Caco-2 (cell line): ENCODE measurements at regions of chr16 and their contacts with region 1.

Region 1: GRCh38 chr16:4936991-4937781 is at the start of gene PPL:
- DNase-seq: peak; percentile 96 to 98
- H3K4me3 ChIP-seq: peak within 1 kb of the TSS; percentile 77
- H3K4me3 Mint-ChIP-seq: peak within 1 kb of the TSS; percentile 88
- H3K27ac Mint-ChIP-seq: peak within 1 kb of the TSS; percentile 63
- H3K4me1 ChIP-seq: peaks cover 17% of the 10 kb centered on the region
- H3K4me1 Mint-ChIP-seq: no peaks in the 10 kb centered on the region
- H3K27me3 ChIP-seq: no peaks in the 10 kb centered on the region
- H3K27me3 Mint-ChIP-seq: no peaks in the 10 kb centered on the region
- CTCF ChIP-seq: no peak
- total RNA-seq, gene PPL: 61.5 and 68.1 TPM in 2 replicates

Region 2: GRCh38 chr16:4846891-4847773 is 90.1 kb before region 1 on chr16 and contains the starts of genes GLYR1 and UBN1:
- CTCF ChIA-PET with region 1: interaction called, 3 read pairs
- POLR2A ChIA-PET with region 1: interaction called, 3 read pairs
- intact Hi-C with region 1: loop called (anchors 5 kb)
- DNase-seq: peak; percentile 97 to 99
- H3K4me3 ChIP-seq: peak within 1 kb of the TSS; percentile 97
- H3K4me3 Mint-ChIP-seq: peak within 1 kb of the TSS; percentile 82
- H3K27ac Mint-ChIP-seq: peak within 1 kb of the TSS; percentile 36
- H3K4me1 ChIP-seq: peaks cover 13% of the 10 kb centered on the region
- H3K4me1 Mint-ChIP-seq: peaks cover 8% of the 10 kb centered on the region
- H3K27me3 ChIP-seq: no peaks in the 10 kb centered on the region
- H3K27me3 Mint-ChIP-seq: no peaks in the 10 kb centered on the region
- CTCF ChIP-seq: no peak
- total RNA-seq, gene GLYR1: 112 and 117 TPM in 2 replicates
- total RNA-seq, gene UBN1: 31.5 and 37.9 TPM in 2 replicates

Region 3: GRCh38 chr16:4918750-4919280 is 18.4 kb before region 1 on chr16:
- CTCF ChIA-PET with region 1: interaction called, 7 read pairs
- POLR2A ChIA-PET with region 1: interaction called, 11 read pairs
- intact Hi-C with region 1: loop called (anchors 2 kb)
- DNase-seq: peak; percentile 89 to 91
- H3K4me3 ChIP-seq: no peak overlapping the region
- H3K4me3 Mint-ChIP-seq: peak overlapping the region; percentile 45
- H3K27ac Mint-ChIP-seq: peak overlapping the region; percentile 95
- H3K4me1 ChIP-seq: peaks cover 43% of the 10 kb centered on the region
- H3K4me1 Mint-ChIP-seq: peaks cover 12% of the 10 kb centered on the region
- H3K27me3 ChIP-seq: no peaks in the 10 kb centered on the region
- H3K27me3 Mint-ChIP-seq: no peaks in the 10 kb centered on the region
- CTCF ChIP-seq: no peak

Region 4: GRCh38 chr16:4924593-4925378 is 12.4 kb before region 1 on chr16:
- CTCF ChIA-PET with region 1: no interaction called
- POLR2A ChIA-PET with region 1: interaction called, 3 read pairs
- intact Hi-C with region 1: loop called (anchors 1 kb)
- DNase-seq: peak; percentile 91 to 95
- H3K4me3 ChIP-seq: no peak overlapping the region
- H3K4me3 Mint-ChIP-seq: peak overlapping the region; percentile 65
- H3K27ac Mint-ChIP-seq: peak overlapping the region; percentile 98
- H3K4me1 ChIP-seq: peaks cover 37% of the 10 kb centered on the region
- H3K4me1 Mint-ChIP-seq: peaks cover 26% of the 10 kb centered on the region
- H3K27me3 ChIP-seq: no peaks in the 10 kb centered on the region
- H3K27me3 Mint-ChIP-seq: no peaks in the 10 kb centered on the region
- CTCF ChIP-seq: peak in 1 of 2 experiments; percentile 64

Region 5: DNA sequence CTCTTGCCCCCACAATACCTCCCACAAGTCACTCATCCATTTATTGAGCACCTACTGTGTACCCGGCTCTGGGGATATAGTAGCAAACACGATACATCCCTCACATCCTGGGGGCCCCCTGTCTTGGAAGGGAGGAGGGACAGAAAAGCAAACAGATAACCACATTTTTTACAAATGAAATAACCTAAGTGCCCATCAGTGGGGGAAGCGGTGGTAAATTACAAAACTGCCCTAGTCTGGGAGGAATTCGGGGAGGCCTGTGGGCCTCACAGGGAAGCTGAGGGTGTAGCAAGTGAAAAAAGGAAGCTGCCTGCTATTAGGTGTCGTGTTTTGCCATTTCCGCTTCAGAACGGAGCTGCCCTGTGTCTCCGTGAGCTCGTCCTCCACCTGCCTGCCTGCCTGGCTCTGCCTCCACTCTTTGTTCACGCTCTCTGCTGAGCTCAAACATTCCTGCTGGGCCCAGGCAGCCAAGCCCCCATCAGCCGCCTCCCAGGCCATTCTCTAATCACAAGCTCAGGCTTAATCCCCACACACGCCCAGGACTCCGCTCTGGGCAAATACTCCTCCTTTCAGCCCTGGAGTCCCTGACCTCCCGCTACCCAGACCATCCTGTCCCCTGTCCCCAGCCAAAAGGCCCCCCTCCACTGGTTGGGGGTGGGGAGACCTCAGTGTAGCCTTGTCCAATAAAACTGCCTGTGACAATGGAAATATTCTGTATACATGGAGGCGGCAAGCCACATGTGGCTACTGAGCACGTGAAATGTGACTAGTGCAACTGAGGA is 10.7 kb after region 1 on chr16:
- CTCF ChIA-PET with region 1: interaction called, 12 read pairs
- POLR2A ChIA-PET with region 1: interaction called, 7 read pairs
- intact Hi-C with region 1: no loop called
- DNase-seq: peak; percentile 74 to 75
- H3K4me3 ChIP-seq: no peak overlapping the region
- H3K4me3 Mint-ChIP-seq: peak overlapping the region; percentile 62
- H3K27ac Mint-ChIP-seq: peak overlapping the region; percentile 93
- H3K4me1 ChIP-seq: peaks cover 58% of the 10 kb centered on the region
- H3K4me1 Mint-ChIP-seq: peaks cover 39% of the 10 kb centered on the region
- H3K27me3 ChIP-seq: no peaks in the 10 kb centered on the region
- H3K27me3 Mint-ChIP-seq: no peaks in the 10 kb centered on the region
- CTCF ChIP-seq: no peak

Region 6: DNA sequence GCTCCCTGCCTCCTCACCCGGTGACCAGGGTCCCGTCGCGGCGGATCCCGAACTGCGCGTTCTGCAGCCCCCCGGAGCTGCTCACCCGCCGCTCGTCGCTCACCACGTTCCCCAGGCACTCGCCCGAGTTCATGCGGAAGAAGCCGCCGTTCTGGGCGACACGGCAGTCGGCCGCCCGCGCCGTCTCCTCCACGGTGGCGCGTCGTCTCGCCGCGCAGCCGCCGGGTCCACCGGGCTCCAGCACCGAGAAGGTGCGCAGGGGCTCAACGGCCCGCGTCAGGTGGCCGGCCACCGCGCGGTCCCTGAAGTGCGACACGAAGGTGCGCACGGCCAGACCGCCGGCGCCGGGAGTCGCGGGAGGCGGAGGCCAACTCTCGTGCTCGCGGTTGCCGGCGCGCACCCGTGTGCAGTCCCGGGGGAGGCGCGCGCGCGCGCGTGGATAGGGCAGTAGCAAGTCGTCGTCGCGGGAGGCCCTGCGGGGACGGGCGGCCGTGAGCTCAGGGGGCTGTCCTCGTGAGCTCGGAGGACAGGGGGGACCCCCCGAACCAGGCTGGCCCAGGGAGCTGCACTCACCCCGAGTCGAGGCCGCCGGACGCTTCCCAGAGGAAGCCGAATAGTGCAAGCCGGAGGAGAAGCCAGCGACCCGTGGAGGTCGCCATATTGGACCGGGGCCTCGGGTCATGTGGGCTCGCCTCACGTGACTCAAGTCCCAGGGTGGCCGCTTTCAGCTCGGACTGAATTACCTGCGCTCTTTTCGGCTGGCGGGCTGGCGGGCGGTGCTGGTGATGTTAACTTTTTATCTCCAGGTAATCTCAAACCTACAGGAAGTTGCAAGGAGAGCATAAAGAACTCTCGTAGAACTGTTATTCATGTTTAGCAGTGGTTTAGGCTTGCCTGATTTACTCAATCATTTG is 96.3 kb after region 1 on chr16 and contains the start of gene NAGPA:
- CTCF ChIA-PET with region 1: no interaction called
- POLR2A ChIA-PET with region 1: no interaction called
- intact Hi-C with region 1: no loop called
- DNase-seq: peak; percentile 86 to 88
- H3K4me3 ChIP-seq: peak within 1 kb of the TSS; percentile 96
- H3K4me3 Mint-ChIP-seq: peak within 1 kb of the TSS; percentile 68
- H3K27ac Mint-ChIP-seq: peak within 1 kb of the TSS; percentile 95
- H3K4me1 ChIP-seq: peaks cover 23% of the 10 kb centered on the region
- H3K4me1 Mint-ChIP-seq: peaks cover 36% of the 10 kb centered on the region
- H3K27me3 ChIP-seq: no peaks in the 10 kb centered on the region
- H3K27me3 Mint-ChIP-seq: no peaks in the 10 kb centered on the region
- CTCF ChIP-seq: peak in 1 of 2 experiments; percentile 8
- total RNA-seq, gene NAGPA: 15.9 and 16.7 TPM in 2 replicates

Region 7: GRCh38 chr16:5056352-5056751 is 119.2 kb after region 1 on chr16:
- CTCF ChIA-PET with region 1: no interaction called
- POLR2A ChIA-PET with region 1: no interaction called
- intact Hi-C with region 1: no loop called
- DNase-seq: peak in 1 of 2 experiments; percentile 30
- H3K4me3 ChIP-seq: no peak overlapping the region
- H3K4me3 Mint-ChIP-seq: no peak overlapping the region
- H3K27ac Mint-ChIP-seq: no peak overlapping the region
- H3K4me1 ChIP-seq: no peaks in the 10 kb centered on the region
- H3K4me1 Mint-ChIP-seq: no peaks in the 10 kb centered on the region
- H3K27me3 ChIP-seq: no peaks in the 10 kb centered on the region
- H3K27me3 Mint-ChIP-seq: peaks cover 5% of the 10 kb centered on the region
- CTCF ChIP-seq: peak in 1 of 2 experiments; percentile 37